Natural killer cell (primary cell): ENCODE measurements at regions of chr6 and their contacts with region 1.

Region 1: DNA sequence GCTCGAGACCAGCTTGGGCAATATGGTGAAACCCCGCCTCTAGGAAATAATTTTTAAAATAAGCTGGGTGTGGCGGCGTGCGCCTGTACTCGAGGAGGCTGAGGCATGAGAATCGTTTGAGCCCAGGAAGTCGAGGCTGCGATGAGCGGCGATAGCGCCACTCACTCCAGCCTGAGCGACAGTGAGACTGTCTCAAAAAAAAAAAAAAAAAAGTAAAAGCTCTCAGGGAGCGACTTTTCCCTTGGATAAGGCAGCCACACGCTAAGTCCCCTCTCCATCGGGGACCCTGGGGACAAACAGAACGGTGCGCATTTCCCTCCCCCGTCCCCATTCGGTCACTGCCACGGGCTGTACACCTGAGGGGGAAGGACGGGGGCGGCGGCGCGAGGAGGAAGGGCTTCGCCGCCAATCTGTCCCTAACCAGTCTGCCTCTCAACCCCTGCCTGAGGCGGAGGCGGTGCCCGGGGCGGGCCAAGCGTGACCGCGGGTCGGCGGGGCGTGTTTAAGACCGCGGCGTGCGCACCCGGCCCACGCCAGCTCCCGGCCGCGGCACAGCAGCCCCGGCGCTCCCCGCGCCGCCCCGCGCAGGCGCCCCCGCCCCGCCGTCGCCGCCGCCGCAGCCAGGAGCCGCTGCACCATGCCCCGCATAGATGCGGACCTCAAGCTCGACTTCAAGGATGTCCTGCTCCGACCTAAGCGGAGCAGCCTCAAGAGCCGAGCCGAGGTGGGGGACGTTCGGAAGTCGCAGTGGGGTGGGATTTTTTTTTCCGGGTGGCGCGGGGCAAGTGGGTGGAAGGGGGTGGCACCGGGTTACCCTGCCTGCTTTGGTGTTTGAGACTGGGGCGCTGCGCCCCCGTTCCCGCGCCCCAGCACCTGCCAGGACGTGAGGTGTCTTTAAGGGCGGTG is at the start of gene GMPR:
- DNase-seq: peak; percentile 76 to 81
- ATAC-seq: peak; percentile 96 to 97 (median 96)
- H3K4me3 ChIP-seq: peak within 1 kb of the TSS; percentile 71
- H3K4me3 Mint-ChIP-seq: peak within 1 kb of the TSS; percentile 95
- H3K27ac ChIP-seq: no peak within 1 kb of the TSS
- H3K27ac Mint-ChIP-seq: peak within 1 kb of the TSS; percentile 53 to 86
- H3K4me1 ChIP-seq: peaks cover 22% of the 10 kb centered on the region
- H3K4me1 Mint-ChIP-seq: peaks cover 23 to 31% of the 10 kb centered on the region in 2 donors
- H3K27me3 ChIP-seq: peaks cover 3% of the 10 kb centered on the region
- H3K27me3 Mint-ChIP-seq: peaks cover 23 to 37% of the 10 kb centered on the region in 2 donors
- CTCF ChIP-seq: no peak
- total RNA-seq, gene GMPR: 0.95 to 3.4 (median 3.2) TPM

Region 2: DNA sequence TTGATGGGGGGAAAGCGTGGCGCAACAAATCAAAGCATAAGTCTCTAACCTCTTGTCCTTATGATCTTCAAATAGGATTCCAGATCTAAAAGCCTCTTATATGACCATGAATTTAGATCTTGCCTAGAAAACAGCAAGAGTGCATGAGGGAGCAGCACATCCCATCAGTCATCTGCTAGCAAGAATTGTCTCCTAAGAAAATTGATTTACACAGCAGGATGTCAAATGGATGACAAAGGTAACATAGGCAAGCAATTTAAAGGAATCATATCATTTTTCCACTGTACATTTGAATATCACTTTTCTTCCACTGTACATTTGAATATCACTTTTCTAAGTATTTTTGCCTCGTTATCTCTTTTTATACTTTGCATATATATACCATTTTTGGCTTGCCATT is 117.0 kb before region 1 on chr6:
- intact Hi-C with region 1: no loop called
- DNase-seq: no peak
- ATAC-seq: no peak
- H3K4me3 ChIP-seq: no peak overlapping the region
- H3K4me3 Mint-ChIP-seq: no peak overlapping the region
- H3K27ac ChIP-seq: no peak overlapping the region
- H3K27ac Mint-ChIP-seq: no peak overlapping the region
- H3K4me1 ChIP-seq: peaks cover 3% of the 10 kb centered on the region
- H3K4me1 Mint-ChIP-seq: peaks cover 19 to 26% of the 10 kb centered on the region in 2 donors
- H3K27me3 ChIP-seq: no peaks in the 10 kb centered on the region
- H3K27me3 Mint-ChIP-seq: peaks cover 3 to 9% of the 10 kb centered on the region in 2 donors
- CTCF ChIP-seq: no peak

Region 3: DNA sequence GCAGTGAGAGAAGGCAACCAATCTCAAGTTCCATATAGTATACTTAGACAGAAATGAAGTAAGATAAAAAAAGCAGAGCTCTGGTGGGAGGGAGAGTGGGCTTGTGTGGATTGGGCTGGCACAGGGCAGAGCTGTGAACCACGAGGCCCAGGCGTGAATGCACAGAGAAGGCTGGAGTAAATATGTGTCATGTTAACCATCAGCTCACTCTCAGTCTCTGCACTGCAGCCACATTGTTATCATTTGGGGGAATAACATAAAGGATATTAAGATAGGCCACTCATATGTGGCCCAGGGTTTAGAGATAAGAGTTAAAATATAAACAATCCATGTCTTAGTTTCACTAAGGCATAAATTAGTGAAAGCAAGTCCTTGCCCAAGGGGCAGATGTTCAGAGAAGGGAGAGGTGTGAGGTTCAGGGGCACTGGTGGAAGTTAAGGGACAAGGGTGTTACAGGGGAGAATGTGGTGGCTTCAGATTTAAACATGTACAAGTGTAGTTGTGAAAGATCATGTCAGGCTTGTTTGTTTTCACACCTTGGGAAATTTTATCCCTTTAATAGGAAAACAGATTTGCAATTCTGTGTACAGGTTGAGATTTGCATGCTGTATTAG is 14.5 kb after region 1 on chr6:
- intact Hi-C with region 1: loop called (anchors 2 kb)
- DNase-seq: peak; percentile 25 to 61
- ATAC-seq: peak; percentile 94 to 100 (median 97)
- H3K4me3 ChIP-seq: no peak overlapping the region
- H3K4me3 Mint-ChIP-seq: peak overlapping the region; percentile 52
- H3K27ac ChIP-seq: no peak overlapping the region
- H3K27ac Mint-ChIP-seq: peak overlapping the region; percentile 30 to 83
- H3K4me1 ChIP-seq: peaks cover 23% of the 10 kb centered on the region
- H3K4me1 Mint-ChIP-seq: peaks cover 16 to 23% of the 10 kb centered on the region in 2 donors
- H3K27me3 ChIP-seq: peaks cover 2% of the 10 kb centered on the region
- H3K27me3 Mint-ChIP-seq: peaks cover 5% of the 10 kb centered on the region in 2 donors
- CTCF ChIP-seq: no peak